ENCODE measurements at regions of chr1 and their contacts with region 1.

Region 1: DNA sequence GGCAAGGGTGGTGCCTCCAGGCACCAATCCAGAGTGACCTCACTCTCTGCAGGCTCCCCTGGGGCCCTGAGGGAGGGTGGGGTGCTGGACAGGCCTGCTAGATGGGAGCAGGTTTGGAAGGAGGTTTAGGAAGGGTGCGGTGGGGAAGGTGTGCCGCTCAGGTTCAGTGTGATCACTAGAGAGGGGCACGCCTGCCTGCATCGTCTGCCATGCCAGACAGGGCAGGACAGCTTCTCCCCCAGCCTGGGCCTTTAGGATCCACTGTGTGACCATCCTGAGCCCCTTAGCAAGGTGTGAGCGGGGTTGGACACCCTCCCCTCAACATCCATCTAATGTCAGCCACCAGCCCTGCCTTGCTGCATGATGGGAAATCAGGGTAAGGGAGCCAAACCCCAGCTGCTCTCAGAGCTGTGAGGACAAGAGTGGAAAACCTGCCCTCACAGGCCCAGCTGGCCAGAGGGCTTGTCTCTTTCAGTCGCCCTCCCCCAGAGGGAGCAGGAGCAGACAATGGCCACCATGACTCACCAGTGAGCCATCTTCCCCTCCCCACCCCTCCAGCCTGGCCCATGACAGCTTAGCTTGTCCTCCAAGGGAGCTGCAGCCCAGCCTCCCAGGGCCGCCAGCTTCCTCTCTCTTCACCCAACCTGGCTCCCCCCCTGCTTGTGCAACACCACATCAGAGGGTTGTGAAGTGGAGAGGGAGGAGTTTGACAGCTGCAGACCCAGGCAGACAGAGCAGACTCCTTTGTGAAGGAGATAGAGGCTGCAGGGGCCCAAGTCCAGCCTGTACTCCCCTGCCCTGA is 37.0 kb downstream of the NUAK2 start:
- DNase-seq: peak; percentile 41

Region 2: DNA sequence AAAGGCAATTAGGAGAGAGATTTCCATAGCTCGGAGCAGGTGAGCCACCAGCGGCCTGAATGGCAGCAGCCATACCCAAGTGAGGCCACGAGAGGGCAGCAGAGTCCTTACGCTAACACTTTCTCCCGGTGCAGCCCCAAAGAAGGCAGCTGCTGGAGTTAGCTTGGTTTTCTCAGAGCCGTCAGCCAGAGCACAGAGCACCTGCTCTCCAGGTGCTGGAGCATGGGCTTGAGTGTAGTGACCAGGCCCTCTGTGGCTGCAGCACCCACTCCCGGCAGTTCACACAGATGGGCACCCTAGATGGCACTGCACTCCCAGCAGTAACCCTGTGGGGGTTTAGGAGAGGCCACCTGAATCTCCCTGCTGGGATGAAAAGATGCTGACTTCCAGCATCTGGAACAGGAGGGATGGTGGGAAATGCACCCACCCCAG is 11.0 kb before region 1 on chr1:
- CTCF ChIA-PET with region 1: interaction called, 10 read pairs
- POLR2A ChIA-PET with region 1: no interaction called
- DNase-seq: peak; percentile 95